B cell (primary cell): ENCODE measurements at regions of chr11 and their contacts with region 1.

Region 1: GRCh38 chr11:65625628-65626342 is 10.2 kb downstream of the PCNX3 start:
- DNase-seq: peak; percentile 84
- ATAC-seq: peak; percentile 95
- H3K4me3 ChIP-seq: no peak overlapping the region
- H3K4me3 Mint-ChIP-seq: no peak overlapping the region
- H3K27ac ChIP-seq: no peak overlapping the region
- H3K27ac Mint-ChIP-seq: peak overlapping the region; percentile 5
- H3K4me1 ChIP-seq: peaks cover 6 to 11% of the 10 kb centered on the region in 2 donors
- H3K4me1 Mint-ChIP-seq: peaks cover 12% of the 10 kb centered on the region
- H3K27me3 ChIP-seq: no peaks in the 10 kb centered on the region
- H3K27me3 Mint-ChIP-seq: no peaks in the 10 kb centered on the region
- CTCF ChIP-seq: peak; percentile 83

Region 2: DNA sequence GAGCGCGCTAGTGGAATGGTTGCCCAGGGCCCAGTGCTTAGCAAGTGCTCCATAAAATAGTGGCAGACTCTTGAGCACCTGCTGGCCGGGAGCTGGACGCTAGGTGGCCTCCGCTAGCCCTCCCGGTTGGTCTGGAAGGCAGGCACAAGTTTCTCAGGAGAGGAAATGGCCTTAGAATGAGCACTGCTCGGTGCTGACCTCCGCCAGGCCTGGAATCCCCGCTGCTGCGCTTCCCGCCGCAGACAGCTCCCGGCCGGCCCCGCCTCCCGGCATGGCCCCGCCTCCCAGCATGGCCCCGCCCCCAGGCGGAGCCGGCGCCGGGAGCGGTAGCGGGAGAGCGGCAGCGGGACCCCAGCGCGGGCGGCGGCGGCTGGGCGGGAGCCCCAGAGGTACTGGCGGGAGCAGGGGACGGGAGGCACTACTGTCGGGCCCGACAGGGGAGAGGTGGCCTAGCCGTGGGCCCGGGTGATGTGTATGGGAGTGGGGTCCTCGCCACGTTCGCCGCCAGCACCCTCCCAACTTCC is 12.1 kb after region 1 on chr11 and contains the start of gene SIPA1:
- CTCF ChIA-PET with region 1: interaction called, 86 read pairs
- POLR2A ChIA-PET with region 1: interaction called, 13 read pairs
- intact Hi-C with region 1: loop called (anchors 1 kb)
- DNase-seq: peak; percentile 88
- ATAC-seq: peak; percentile 32
- H3K4me3 ChIP-seq: peak within 1 kb of the TSS; percentile 70 to 97 (median 93)
- H3K4me3 Mint-ChIP-seq: peak within 1 kb of the TSS; percentile 99
- H3K27ac ChIP-seq: peak within 1 kb of the TSS; percentile 100
- H3K27ac Mint-ChIP-seq: peak within 1 kb of the TSS; percentile 98
- H3K4me1 ChIP-seq: peaks cover 37 to 66% of the 10 kb centered on the region in 2 donors
- H3K4me1 Mint-ChIP-seq: peaks cover 42% of the 10 kb centered on the region
- H3K27me3 ChIP-seq: no peaks in the 10 kb centered on the region
- H3K27me3 Mint-ChIP-seq: no peaks in the 10 kb centered on the region
- CTCF ChIP-seq: no peak
- total RNA-seq, gene SIPA1: 448 and 461 TPM in 2 replicates

Region 3: DNA sequence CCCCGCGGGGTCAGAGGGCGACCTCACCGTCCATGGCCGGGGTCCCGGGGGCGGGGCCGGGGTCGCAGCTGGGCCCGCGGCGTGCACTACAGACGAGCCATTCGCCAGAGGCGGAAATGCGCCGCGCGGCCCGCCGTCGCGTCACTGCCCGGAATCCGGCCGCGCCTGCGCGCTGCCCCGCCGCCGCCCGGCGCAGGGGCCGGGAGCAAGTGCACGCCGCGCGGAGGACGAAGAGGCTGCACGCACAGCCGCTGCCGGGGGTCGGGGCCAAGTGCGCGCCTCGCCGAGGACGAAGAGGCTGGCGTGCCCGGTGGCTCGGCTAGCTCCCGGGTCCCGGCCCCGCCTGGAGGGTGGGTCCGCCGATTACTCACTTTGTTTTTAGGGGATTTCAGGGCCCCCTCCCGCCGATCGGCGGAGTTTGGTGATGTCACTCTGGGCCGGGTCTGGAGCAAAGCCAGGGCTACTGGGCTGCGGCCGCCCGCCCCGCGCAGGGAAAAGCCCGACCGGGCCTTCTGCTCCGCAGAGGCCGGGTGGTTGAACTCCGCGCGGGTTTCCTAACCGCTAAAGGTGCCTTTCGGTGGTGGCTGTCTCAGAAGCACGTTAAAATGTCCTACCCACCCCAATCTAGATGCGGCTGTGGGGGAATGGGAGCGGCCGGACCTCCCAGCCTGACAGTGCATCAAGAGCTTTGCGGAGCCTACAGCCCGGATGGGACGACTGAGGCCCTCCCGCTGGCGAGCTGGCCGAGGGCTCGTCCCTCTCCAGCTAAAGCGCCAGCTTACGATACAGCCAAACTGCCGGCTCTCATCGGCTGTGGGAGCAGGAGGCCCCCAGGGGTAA is 37.2 kb after region 1 on chr11 and contains the start of gene RELA:
- CTCF ChIA-PET with region 1: interaction called, 14 read pairs
- POLR2A ChIA-PET with region 1: interaction called, 4 read pairs
- intact Hi-C with region 1: no loop called
- DNase-seq: peak; percentile 94
- ATAC-seq: peak; percentile 86
- H3K4me3 ChIP-seq: peak within 1 kb of the TSS; percentile 85 to 99 (median 95)
- H3K4me3 Mint-ChIP-seq: peak within 1 kb of the TSS; percentile 89
- H3K27ac ChIP-seq: peak within 1 kb of the TSS; percentile 97 to 100
- H3K27ac Mint-ChIP-seq: peak within 1 kb of the TSS; percentile 94
- H3K4me1 ChIP-seq: peaks cover 19 to 32% of the 10 kb centered on the region in 2 donors
- H3K4me1 Mint-ChIP-seq: peaks cover 31% of the 10 kb centered on the region
- H3K27me3 ChIP-seq: no peaks in the 10 kb centered on the region
- H3K27me3 Mint-ChIP-seq: no peaks in the 10 kb centered on the region
- CTCF ChIP-seq: no peak
- total RNA-seq, gene RELA: 154 and 160 TPM in 2 replicates

Region 4: GRCh38 chr11:65766535-65766934 is 140.8 kb after region 1 on chr11:
- CTCF ChIA-PET with region 1: interaction called, 29 read pairs
- POLR2A ChIA-PET with region 1: no interaction called
- intact Hi-C with region 1: no loop called
- DNase-seq: no peak
- ATAC-seq: no peak
- H3K4me3 ChIP-seq: no peak overlapping the region
- H3K4me3 Mint-ChIP-seq: no peak overlapping the region
- H3K27ac ChIP-seq: no peak overlapping the region
- H3K27ac Mint-ChIP-seq: no peak overlapping the region
- H3K4me1 ChIP-seq: peaks cover 0 to 4% of the 10 kb centered on the region in 2 donors
- H3K4me1 Mint-ChIP-seq: peaks cover 3% of the 10 kb centered on the region
- H3K27me3 ChIP-seq: no peaks in the 10 kb centered on the region
- H3K27me3 Mint-ChIP-seq: peaks cover under 1% of the 10 kb centered on the region
- CTCF ChIP-seq: no peak

Region 5: GRCh38 chr11:65988791-65989592 is 363.2 kb after region 1 on chr11:
- CTCF ChIA-PET with region 1: interaction called, 3 read pairs
- POLR2A ChIA-PET with region 1: no interaction called
- intact Hi-C with region 1: loop called (anchors 1 kb)
- DNase-seq: peak; percentile 96
- ATAC-seq: peak; percentile 99
- H3K4me3 ChIP-seq: no peak overlapping the region
- H3K4me3 Mint-ChIP-seq: no peak overlapping the region
- H3K27ac ChIP-seq: no peak overlapping the region
- H3K27ac Mint-ChIP-seq: peak overlapping the region; percentile 84
- H3K4me1 ChIP-seq: peaks cover 3 to 7% of the 10 kb centered on the region in 2 donors
- H3K4me1 Mint-ChIP-seq: peaks cover 5% of the 10 kb centered on the region
- H3K27me3 ChIP-seq: no peaks in the 10 kb centered on the region
- H3K27me3 Mint-ChIP-seq: no peaks in the 10 kb centered on the region
- CTCF ChIP-seq: peak; percentile 99

Region 6: DNA sequence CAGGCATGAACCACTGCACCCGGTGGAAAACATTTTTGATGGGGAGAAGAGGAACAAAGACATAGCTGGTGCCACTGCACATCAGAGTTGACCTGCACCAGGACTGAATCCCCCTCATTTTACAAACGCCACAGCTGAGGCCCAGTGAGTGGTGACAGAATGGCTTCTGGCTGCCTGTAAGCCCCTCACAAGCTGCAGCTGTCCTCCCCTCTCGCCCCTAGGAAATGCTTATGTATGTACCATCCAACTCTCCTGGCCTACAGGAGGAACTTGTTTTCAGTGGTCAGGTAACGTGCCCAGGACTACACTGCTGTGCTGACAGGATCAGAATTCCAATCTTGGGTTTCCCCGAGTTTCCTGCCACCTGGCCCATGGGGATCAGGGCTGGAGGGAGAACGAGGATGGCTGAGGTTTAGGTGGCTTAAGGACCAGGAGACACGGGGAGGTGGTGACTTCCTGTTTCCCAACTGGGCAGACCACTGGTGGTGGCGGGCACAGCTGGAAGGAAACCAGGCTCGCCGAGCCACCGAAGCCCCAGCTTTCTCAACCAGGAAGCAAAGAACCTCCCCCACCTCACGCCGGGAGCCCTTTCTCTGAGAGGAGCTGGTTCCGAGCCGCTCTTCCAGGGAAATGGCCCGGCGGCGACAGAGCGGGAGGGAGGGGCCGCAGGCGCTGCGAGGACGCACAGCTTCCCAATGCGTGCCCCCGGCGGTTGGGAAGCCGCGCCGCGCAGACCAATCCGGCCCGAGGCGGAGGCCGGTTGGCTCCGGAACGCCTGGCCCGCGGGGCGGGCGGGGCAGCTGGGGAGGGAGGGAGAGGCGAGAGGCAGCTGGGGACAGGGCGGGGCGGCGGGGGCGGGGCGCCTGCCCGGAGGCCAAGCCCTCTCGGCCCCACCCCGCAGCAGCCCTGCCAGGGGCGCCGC is 1230.0 kb after region 1 on chr11:
- CTCF ChIA-PET with region 1: no interaction called
- POLR2A ChIA-PET with region 1: no interaction called
- intact Hi-C with region 1: no loop called
- DNase-seq: no peak
- ATAC-seq: peak; percentile 87
- H3K4me3 ChIP-seq: peak overlapping the region; percentile 11 to 74 (median 70)
- H3K4me3 Mint-ChIP-seq: peak overlapping the region; percentile 94
- H3K27ac ChIP-seq: peak overlapping the region; percentile 65 to 78
- H3K27ac Mint-ChIP-seq: peak overlapping the region; percentile 92
- H3K4me1 ChIP-seq: peaks cover 5 to 20% of the 10 kb centered on the region in 2 donors
- H3K4me1 Mint-ChIP-seq: peaks cover 14% of the 10 kb centered on the region
- H3K27me3 ChIP-seq: no peaks in the 10 kb centered on the region
- H3K27me3 Mint-ChIP-seq: no peaks in the 10 kb centered on the region
- CTCF ChIP-seq: no peak